Posterior cingulate gyrus (tissue), 11 donors: ENCODE measurements at regions of chr12 and their contacts with region 1.

Region 1: GRCh38 chr12:113424915-113425823 is 3.0 kb downstream of the SDSL start:
- DNase-seq: peak in 7 of 10 donors; percentile 32 to 92 (median 67)

Region 2: DNA sequence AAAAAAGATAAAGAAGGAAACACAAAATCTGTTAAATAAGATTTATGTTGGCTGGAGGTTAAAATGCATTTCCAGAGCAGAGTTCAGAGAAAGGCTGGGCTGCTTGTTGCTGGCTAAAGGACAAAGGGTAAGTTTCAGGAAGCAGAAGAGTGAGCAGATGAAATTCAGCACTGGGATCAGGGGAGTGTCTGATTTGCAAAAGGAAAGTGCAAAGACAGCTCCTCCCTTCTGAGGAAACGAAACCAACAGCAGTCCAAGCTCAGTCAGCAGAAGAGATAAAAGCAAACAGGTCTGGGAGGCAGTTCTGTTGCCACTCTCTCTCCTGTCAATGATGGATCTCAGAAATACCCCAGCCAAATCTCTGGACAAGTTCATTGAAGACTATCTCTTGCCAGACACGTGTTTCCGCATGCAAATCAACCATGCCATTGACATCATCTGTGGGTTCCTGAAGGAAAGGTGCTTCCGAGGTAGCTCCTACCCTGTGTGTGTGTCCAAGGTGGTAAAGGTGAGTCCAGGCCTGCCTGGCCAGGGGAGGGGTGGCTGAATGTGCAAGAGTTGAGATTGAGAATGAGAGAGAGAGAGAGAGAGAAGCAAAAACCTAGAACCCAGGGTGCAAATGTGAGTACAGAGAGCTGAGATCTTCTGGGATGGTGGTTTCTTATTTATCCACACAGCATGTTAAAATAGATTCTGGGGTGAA is 518.3 kb before region 1 on chr12 and contains the start of gene OAS1:
- intact Hi-C with region 1: no loop called
- DNase-seq: no peak

Region 3: GRCh38 chr12:113196996-113197395 is 228.2 kb before region 1 on chr12:
- intact Hi-C with region 1: loop called (anchors 5 kb)
- DNase-seq: peak in 6 of 10 donors; percentile 31 to 91 (median 62)

Region 4: GRCh38 chr12:113310489-113310888 is 114.7 kb before region 1 on chr12:
- intact Hi-C with region 1: loop called (anchors 1 kb)
- DNase-seq: no peak

Region 5: GRCh38 chr12:113448873-113449272 is 23.7 kb after region 1 on chr12:
- intact Hi-C with region 1: no loop called
- DNase-seq: peak in 1 of 10 donors; percentile 15

Region 6: DNA sequence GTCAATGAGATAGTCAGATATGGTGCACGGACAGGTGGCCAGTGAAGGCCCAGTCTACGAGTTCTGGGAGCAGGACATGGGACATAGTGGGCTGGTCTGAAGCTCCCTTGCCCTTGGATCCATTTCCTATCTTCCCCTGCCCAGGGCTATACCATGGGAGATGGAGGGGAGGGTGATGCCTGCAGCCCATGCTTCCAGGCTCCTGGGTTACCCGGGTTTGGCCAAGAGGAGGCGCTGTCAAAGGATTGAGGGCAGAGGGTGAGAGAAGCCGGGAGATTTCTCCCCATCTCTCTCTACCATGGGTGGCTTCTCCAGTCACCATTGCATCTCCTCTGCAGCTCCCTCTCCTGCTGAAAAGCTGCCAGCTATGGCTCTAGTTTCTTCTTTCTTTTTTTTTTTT is 99.3 kb after region 1 on chr12:
- intact Hi-C with region 1: no loop called
- DNase-seq: no peak

Region 7: GRCh38 chr12:115341442-115341841 is 1916.3 kb after region 1 on chr12:
- intact Hi-C with region 1: no loop called
- DNase-seq: peak in 1 of 10 donors; percentile 45